Panc1 (cell line): ENCODE measurements at regions of chr4 and their contacts with region 1.

Region 1: DNA sequence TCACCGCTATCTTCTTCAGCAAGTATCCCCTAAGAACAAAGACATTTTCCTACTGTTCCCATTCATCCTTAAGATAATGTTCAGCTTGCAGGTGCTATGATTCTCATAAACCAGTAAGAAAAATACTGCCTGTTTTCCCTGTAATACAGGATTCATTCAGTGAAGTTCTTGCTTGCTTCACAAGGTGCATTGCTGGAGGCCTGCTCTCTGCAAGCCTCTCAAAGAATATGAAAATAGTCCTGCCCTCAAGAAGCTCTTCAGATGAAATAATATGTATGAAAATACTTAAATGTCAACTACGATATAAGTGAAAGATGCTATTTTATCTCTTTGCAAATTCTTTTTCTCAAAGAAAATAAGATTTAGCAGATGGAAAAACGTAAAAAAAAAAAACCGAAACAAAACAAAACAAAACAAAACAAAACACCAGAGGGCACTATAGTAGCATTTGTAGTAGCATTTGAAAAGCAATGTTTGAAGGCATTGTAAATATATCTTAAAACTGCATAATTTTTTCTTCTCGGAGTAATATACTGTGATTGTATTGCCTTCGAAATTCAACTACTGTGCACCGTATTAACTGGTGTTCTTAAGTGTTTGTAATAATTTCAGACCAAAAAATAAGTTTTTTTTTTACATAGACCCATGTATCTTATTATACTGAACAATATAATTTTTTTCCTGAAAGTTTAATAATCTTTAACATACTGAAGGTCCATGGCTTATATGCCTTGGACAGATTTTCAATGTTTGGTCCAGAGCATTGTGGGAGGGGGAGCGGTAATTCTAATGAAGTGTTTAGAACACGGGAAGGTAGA is 26.0 kb downstream of the ADH4 start:
- DNase-seq: no peak
- ATAC-seq: no peak
- H3K4me3 ChIP-seq: no peak overlapping the region
- H3K27ac ChIP-seq: no peak overlapping the region
- H3K4me1 ChIP-seq: no peaks in the 10 kb centered on the region
- H3K27me3 ChIP-seq: no peaks in the 10 kb centered on the region
- CTCF ChIP-seq: peak; percentile 35; the same call in 1 of the 2 replicates

Region 2: GRCh38 chr4:99405433-99406115 is 287.5 kb after region 1 on chr4:
- CTCF ChIA-PET with region 1: no interaction called
- POLR2A ChIA-PET with region 1: no interaction called
- in situ Hi-C with region 1: no loop called
- intact Hi-C with region 1: loop called (anchors 1 kb)
- DNase-seq: peak; percentile 61
- ATAC-seq: peak; percentile 82
- H3K4me3 ChIP-seq: no peak overlapping the region
- H3K27ac ChIP-seq: no peak overlapping the region
- H3K4me1 ChIP-seq: no peaks in the 10 kb centered on the region
- H3K27me3 ChIP-seq: no peaks in the 10 kb centered on the region
- CTCF ChIP-seq: peak; percentile 81

Region 3: GRCh38 chr4:99438405-99438780 is 320.3 kb after region 1 on chr4:
- CTCF ChIA-PET with region 1: no interaction called
- POLR2A ChIA-PET with region 1: interaction called, 12 read pairs
- in situ Hi-C with region 1: no loop called
- intact Hi-C with region 1: no loop called
- DNase-seq: no peak
- ATAC-seq: no peak
- H3K4me3 ChIP-seq: no peak overlapping the region
- H3K27ac ChIP-seq: no peak overlapping the region
- H3K4me1 ChIP-seq: no peaks in the 10 kb centered on the region
- H3K27me3 ChIP-seq: no peaks in the 10 kb centered on the region
- CTCF ChIP-seq: no peak

Region 4: DNA sequence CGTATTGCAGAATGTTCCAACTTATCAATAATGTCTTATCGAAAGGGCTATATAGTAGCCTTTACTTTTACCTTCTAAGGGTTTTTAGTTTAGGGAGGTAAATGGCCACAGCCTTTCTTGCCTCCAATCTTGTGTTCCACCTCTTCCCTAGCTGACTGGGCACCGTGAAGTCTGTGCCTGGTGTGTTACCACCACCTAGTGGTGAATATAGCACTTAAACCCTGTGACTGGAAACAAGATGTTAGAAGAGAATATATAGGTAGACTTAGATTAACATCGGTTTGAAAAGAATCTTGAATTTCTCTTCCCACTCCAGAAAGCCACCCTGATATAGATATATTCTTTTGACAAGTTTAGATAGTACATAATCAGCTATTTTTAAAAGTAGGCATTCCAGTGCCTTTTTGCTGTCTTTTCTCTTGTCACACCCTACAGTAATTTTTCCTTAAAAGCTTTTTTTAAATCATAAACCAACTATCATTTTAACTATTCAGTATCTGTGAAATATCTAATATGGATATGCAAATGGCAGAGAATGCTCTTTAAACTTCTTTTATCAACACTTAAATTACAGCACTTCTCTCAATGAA is 344.9 kb after region 1 on chr4:
- CTCF ChIA-PET with region 1: no interaction called
- POLR2A ChIA-PET with region 1: no interaction called
- in situ Hi-C with region 1: no loop called
- intact Hi-C with region 1: loop called (anchors 2 kb)
- DNase-seq: peak; percentile 25
- ATAC-seq: peak; percentile 77
- H3K4me3 ChIP-seq: no peak overlapping the region
- H3K27ac ChIP-seq: no peak overlapping the region
- H3K4me1 ChIP-seq: no peaks in the 10 kb centered on the region
- H3K27me3 ChIP-seq: no peaks in the 10 kb centered on the region; the same call in 1 of the 2 replicates
- CTCF ChIP-seq: peak; percentile 76